ENCODE measurements at regions of chr6 and their contacts with region 1.

Region 1: GRCh38 chr6:132768051-132768517 is 10.4 kb upstream of the VNN2 start:
- DNase-seq: peak; percentile 39
- CTCF ChIP-seq: peak; percentile 64

Region 2: GRCh38 chr6:132279592-132280139 is 488.4 kb before region 1 on chr6:
- in situ Hi-C with region 1: loop called (anchors 25 kb)
- DNase-seq: peak; percentile 64
- CTCF ChIP-seq: peak; percentile 75

Region 3: GRCh38 chr6:132527791-132528190 is 240.3 kb before region 1 on chr6:
- in situ Hi-C with region 1: loop called (anchors 10 kb)
- DNase-seq: no peak
- CTCF ChIP-seq: no peak

Region 4: GRCh38 chr6:132669690-132670291 is 98.3 kb before region 1 on chr6:
- in situ Hi-C with region 1: loop called (anchors 5 kb)
- DNase-seq: peak; percentile 47
- CTCF ChIP-seq: peak; percentile 33

Measured in GM13976 (cell line).